ENCODE measurements at regions of chr13 and their contacts with region 1.

Region 1: DNA sequence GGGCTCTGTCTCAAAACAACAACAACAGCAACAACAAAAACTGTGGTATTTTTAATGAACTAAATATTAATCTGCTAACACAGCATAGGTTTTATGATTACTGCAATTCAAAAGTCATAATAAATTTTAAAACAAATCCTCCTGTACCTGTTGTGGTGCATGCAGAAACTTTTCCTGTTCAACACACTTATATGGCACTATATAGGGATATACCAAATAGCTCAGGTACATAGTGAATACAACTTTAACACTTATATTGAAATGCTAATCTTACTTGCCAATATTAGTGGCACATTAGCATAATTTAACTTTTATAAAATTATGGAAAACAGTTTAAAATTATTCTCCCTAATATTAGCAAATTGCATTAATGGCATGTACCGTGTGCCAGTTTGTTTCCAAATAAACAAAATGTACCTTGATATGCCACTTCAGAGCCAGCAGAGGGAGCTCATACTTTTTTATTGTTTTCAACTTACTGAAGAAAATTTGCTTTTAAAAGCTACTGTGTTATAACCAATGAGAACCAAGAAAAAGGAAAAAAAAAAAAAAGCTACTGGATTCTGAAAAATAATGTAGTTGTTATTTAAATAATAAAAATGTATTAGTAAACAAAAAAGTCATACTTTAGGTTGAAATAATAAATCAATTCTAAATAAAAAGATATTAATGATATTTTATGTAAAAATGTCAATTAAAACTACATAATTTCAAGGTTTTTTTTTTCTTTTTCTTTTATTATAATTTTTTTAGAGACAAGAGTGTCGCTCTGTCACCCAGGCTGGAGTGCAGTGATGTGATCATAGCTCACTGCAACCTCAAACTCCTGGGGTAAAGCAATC is 18.0 kb upstream of the RBM26 start:
- DNase-seq: no peak
- H3K4me3 Mint-ChIP-seq: no peak overlapping the region
- H3K27ac Mint-ChIP-seq: no peak overlapping the region
- H3K4me1 Mint-ChIP-seq: peaks cover 19% of the 10 kb centered on the region
- H3K27me3 Mint-ChIP-seq: no peaks in the 10 kb centered on the region

Region 2: DNA sequence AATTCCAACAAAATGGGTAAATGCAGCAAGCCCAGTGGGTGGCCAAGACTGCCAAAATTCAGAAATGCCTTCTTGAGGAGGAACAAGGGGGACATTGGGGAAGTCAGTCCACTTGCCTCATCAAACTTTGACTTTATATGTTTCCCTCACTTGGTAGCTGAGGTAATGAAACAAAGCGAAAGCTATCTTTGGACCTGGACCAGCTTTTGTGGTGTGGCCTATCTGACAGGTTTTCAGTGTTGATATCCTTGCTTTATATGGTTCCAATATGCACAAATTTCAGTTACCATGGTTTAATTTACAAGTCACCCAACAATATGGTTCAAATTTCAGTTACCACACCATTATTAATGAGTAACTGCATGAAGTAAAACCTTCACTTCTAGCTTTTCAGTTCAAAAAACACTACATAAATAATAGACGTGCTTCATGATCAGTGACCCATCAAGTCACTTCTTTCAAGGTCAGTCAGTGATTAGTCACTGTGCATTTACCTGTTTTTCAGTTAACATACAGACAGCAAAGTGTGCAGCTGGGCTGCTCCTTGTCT is 803.0 kb before region 1 on chr13:
- intact Hi-C with region 1: no loop called
- DNase-seq: no peak
- H3K4me3 Mint-ChIP-seq: no peak overlapping the region
- H3K27ac Mint-ChIP-seq: no peak overlapping the region
- H3K4me1 Mint-ChIP-seq: peaks cover 10% of the 10 kb centered on the region
- H3K27me3 Mint-ChIP-seq: no peaks in the 10 kb centered on the region

Region 3: DNA sequence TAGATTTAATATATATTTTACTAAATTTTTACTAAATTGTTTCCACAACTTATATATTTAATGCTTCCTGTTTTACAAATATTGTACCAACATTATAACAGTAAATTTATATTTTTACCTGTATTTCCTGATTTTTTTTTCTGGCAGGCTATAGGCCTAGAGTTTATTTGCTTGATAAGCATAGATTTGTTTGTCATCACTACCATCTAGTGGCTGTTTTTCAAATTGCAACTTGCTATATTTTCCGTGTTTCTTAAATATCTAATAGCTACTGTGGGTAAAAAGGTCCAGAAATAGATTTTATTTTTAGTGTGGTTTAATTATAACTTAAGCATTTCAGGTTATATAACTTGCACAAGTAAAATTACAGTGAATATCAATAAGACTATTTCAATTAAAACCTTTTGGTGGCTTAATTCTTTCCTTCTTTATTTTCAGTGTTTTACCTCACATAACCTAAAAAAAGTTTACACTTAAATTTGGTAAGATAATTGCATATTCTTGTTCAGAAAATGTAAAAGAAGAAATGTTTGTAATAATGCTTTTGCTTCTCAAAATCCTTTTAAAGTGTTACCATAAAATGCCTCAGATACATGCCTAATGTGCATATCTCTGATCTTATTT is 117.5 kb after region 1 on chr13:
- intact Hi-C with region 1: loop called (anchors 1 kb)
- DNase-seq: peak; percentile 77
- H3K4me3 Mint-ChIP-seq: no peak overlapping the region
- H3K27ac Mint-ChIP-seq: no peak overlapping the region
- H3K4me1 Mint-ChIP-seq: peaks cover 19% of the 10 kb centered on the region
- H3K27me3 Mint-ChIP-seq: no peaks in the 10 kb centered on the region